IMR-90 (cell line): ENCODE measurements at regions of chr11 and their contacts with region 1.

Region 1: GRCh38 chr11:61187505-61188130 is 15.7 kb upstream of the PGA3 start:
- DNase-seq: peak; percentile 77
- ATAC-seq: peak; percentile 99
- H3K4me3 ChIP-seq: no peak overlapping the region
- H3K27ac ChIP-seq: no peak overlapping the region
- H3K4me1 ChIP-seq: no peaks in the 10 kb centered on the region
- H3K27me3 ChIP-seq: no peaks in the 10 kb centered on the region; the same call in none of the 2 replicates
- CTCF ChIP-seq: peak; percentile 93
- POLR2A ChIP-seq: no peak
- RAD21 ChIP-seq: peak; percentile 94

Region 2: GRCh38 chr11:60775420-60775961 is 412.1 kb before region 1 on chr11:
- CTCF ChIA-PET with region 1: no interaction called
- POLR2A ChIA-PET with region 1: no interaction called
- dilution Hi-C with region 1: no loop called
- in situ Hi-C with region 1: no loop called
- intact Hi-C with region 1: loop called (anchors 1 kb)
- DNase-seq: peak; percentile 86
- ATAC-seq: peak; percentile 97
- H3K4me3 ChIP-seq: no peak overlapping the region
- H3K27ac ChIP-seq: no peak overlapping the region
- H3K4me1 ChIP-seq: no peaks in the 10 kb centered on the region; the same call in 1 of the 2 replicates
- H3K27me3 ChIP-seq: peaks cover 7% of the 10 kb centered on the region
- CTCF ChIP-seq: peak; percentile 93
- POLR2A ChIP-seq: no peak
- RAD21 ChIP-seq: peak; percentile 87

Region 3: DNA sequence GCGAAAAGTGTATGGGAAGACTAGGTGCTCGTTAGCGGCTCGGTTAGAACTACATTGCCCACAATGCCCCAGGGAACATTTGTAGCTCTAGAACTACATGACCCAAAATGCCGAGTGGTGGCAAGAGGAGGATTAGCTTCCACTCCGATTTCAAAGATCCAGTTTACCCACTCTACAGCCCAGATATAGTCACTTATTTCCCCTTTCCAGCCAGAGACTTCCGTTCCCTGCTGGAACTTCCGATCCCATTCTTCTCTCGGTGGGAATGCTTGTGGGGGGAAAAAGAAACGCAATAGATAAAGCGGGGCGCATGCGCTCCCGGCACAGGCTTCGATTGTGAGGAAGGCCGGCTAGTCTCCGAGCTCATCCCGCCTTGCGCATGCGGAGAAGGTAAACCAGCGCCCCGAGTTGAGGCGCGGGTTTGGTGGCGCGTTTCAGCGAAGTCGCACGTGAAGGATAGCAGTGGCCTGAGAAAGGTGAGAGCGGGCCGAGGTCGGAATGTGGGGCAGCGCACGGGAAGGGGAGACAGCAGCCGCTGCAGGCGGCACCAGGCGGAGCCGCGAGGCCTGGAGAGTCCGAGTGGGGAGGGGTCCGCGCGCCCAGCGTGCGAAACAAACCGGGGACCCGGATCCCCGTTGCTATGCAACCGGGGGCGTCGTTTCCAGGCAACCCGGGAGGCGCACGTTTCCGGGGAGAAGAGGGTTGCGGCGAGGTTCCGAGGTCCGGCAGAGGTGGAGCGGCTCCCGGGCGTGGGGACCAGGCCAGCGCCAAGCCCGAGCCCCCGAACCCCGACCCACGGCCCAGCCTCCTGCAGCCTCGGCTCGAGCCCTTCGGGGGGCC is 273.6 kb before region 1 on chr11 and contains the start of gene TMEM109:
- CTCF ChIA-PET with region 1: no interaction called
- POLR2A ChIA-PET with region 1: no interaction called
- dilution Hi-C with region 1: no loop called
- in situ Hi-C with region 1: no loop called
- intact Hi-C with region 1: loop called (anchors 2 kb)
- DNase-seq: peak; percentile 86
- ATAC-seq: peak; percentile 83
- H3K4me3 ChIP-seq: peak within 1 kb of the TSS; percentile 52
- H3K27ac ChIP-seq: peak within 1 kb of the TSS; percentile 94
- H3K4me1 ChIP-seq: peaks cover 7% of the 10 kb centered on the region
- H3K27me3 ChIP-seq: peaks cover 10% of the 10 kb centered on the region
- CTCF ChIP-seq: no peak
- POLR2A ChIP-seq: peak; percentile 21; the same call in 1 of the 2 replicates
- RAD21 ChIP-seq: no peak
- total RNA-seq, gene TMEM109: 15.1 and 17.2 TPM in 2 replicates

Region 4: DNA sequence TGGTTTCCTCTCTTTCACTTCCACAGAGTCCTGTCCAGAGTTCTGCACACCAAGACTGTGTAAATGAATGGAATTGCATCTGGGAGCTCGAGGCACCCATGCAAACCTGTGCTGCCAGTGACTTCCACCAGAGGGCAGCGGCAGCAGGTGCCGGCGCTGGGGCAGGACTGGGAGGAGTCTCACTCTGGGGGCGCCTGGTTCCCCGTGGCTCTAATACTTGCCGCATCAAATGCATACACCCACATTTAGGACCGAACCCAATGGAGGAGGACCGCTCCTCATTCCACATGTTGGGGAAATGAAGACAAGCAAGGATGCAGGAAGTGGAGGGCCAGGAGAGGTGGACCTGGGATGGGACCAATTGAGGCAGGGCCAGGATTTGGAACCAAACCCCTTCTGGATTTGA is 217.2 kb before region 1 on chr11:
- CTCF ChIA-PET with region 1: interaction called, 8 read pairs
- POLR2A ChIA-PET with region 1: no interaction called
- dilution Hi-C with region 1: no loop called
- in situ Hi-C with region 1: no loop called
- intact Hi-C with region 1: loop called (anchors 1 kb)
- DNase-seq: peak; percentile 29
- ATAC-seq: peak; percentile 97
- H3K4me3 ChIP-seq: no peak overlapping the region
- H3K27ac ChIP-seq: no peak overlapping the region
- H3K4me1 ChIP-seq: no peaks in the 10 kb centered on the region
- H3K27me3 ChIP-seq: peaks cover 45% of the 10 kb centered on the region
- CTCF ChIP-seq: peak; percentile 73
- POLR2A ChIP-seq: no peak
- RAD21 ChIP-seq: peak; percentile 72

Region 5: GRCh38 chr11:61129639-61130523 is 57.7 kb before region 1 on chr11:
- CTCF ChIA-PET with region 1: interaction called, 3 read pairs
- POLR2A ChIA-PET with region 1: no interaction called
- dilution Hi-C with region 1: no loop called
- in situ Hi-C with region 1: loop called (anchors 5 kb)
- intact Hi-C with region 1: loop called (anchors 1 kb)
- DNase-seq: peak; percentile 93
- ATAC-seq: peak; percentile 96
- H3K4me3 ChIP-seq: peak overlapping the region; percentile 11; the same call in 1 of the 2 replicates
- H3K27ac ChIP-seq: peak overlapping the region; percentile 18
- H3K4me1 ChIP-seq: peaks cover 10% of the 10 kb centered on the region
- H3K27me3 ChIP-seq: peaks cover 5% of the 10 kb centered on the region; the same call in 1 of the 2 replicates
- CTCF ChIP-seq: peak; percentile 100
- POLR2A ChIP-seq: peak; percentile 39; the same call in 1 of the 2 replicates
- RAD21 ChIP-seq: peak; percentile 93

Region 6: DNA sequence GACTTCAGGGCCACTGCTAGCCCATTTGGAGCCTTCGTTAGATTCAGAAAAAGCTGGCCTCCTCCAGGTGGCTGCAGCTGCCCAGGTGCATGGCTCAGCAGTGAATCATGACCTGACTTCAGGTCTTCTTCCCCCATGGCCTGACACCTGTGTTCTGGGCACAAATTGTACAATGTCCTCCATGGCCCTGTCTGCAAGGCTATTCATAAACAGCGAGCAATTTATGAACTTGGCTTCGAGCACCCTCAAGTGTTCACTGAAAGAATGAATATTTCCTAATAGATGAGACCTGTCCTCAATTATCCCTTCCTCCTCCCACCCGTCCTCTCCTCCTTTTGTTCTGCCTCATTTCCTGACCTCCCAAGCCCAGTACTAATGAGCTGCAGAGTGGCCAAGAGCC is 14.2 kb before region 1 on chr11:
- CTCF ChIA-PET with region 1: interaction called, 11 read pairs
- POLR2A ChIA-PET with region 1: no interaction called
- dilution Hi-C with region 1: no loop called
- in situ Hi-C with region 1: no loop called
- intact Hi-C with region 1: no loop called
- DNase-seq: peak; percentile 34
- ATAC-seq: peak; percentile 49
- H3K4me3 ChIP-seq: no peak overlapping the region
- H3K27ac ChIP-seq: no peak overlapping the region
- H3K4me1 ChIP-seq: no peaks in the 10 kb centered on the region
- H3K27me3 ChIP-seq: peaks cover 59% of the 10 kb centered on the region
- CTCF ChIP-seq: peak; percentile 53
- POLR2A ChIP-seq: no peak
- RAD21 ChIP-seq: peak; percentile 57

Region 7: GRCh38 chr11:61270354-61271076 is 82.9 kb after region 1 on chr11:
- CTCF ChIA-PET with region 1: no interaction called
- POLR2A ChIA-PET with region 1: no interaction called
- dilution Hi-C with region 1: no loop called
- in situ Hi-C with region 1: no loop called
- intact Hi-C with region 1: no loop called
- DNase-seq: peak; percentile 76
- ATAC-seq: peak; percentile 78
- H3K4me3 ChIP-seq: no peak overlapping the region
- H3K27ac ChIP-seq: no peak overlapping the region
- H3K4me1 ChIP-seq: peaks cover 2% of the 10 kb centered on the region
- H3K27me3 ChIP-seq: no peaks in the 10 kb centered on the region
- CTCF ChIP-seq: no peak
- POLR2A ChIP-seq: no peak
- RAD21 ChIP-seq: no peak